HepG2 (cell line): ENCODE measurements at regions of chr17 and their contacts with region 1.

Region 1: GRCh38 chr17:64975329-64976087 is 56.2 kb upstream of the LRRC37A3 start:
- DNase-seq: peak; percentile 87
- ATAC-seq: peak; percentile 93
- H3K4me3 ChIP-seq: peak overlapping the region; percentile 58 to 86 (median 82)
- H3K27ac ChIP-seq: peak overlapping the region; percentile 71
- H3K4me1 ChIP-seq: peaks cover 29% of the 10 kb centered on the region
- H3K27me3 ChIP-seq: no peaks in the 10 kb centered on the region
- CTCF ChIP-seq: no peak; the same call in 1 of the 2 replicates
- EP300 ChIP-seq: no peak
- POLR2A ChIP-seq: peak; percentile 60 to 95
- RAD21 ChIP-seq: peak; percentile 33

Region 2: DNA sequence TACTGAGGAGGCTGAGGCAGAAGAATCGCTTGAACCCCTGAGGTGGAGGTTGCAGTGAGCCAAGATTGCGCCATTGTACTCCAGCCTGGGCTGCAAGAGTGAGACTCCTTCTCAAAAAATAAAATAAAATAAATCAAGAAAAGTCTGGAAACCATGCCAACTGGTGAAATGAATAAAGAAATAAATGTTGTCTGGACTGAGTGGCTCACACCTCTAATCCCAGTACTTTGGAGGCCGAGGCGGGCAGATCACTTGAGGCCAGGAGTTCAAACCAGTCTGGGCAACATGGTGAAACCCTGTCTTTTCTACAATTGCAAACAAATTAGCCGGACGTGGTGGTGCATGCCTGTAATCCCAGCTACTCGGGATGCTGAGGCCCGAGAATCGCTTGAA is 55.5 kb before region 1 on chr17:
- CTCF ChIA-PET with region 1: no interaction called
- POLR2A ChIA-PET with region 1: interaction called, 11 read pairs
- in situ Hi-C with region 1: no loop called
- intact Hi-C with region 1: no loop called
- DNase-seq: peak; percentile 46
- ATAC-seq: peak; percentile 34
- H3K4me3 ChIP-seq: peak overlapping the region; percentile 60 to 78 (median 64)
- H3K27ac ChIP-seq: peak overlapping the region; percentile 57
- H3K4me1 ChIP-seq: peaks cover 14% of the 10 kb centered on the region
- H3K27me3 ChIP-seq: no peaks in the 10 kb centered on the region
- CTCF ChIP-seq: no peak
- EP300 ChIP-seq: no peak
- POLR2A ChIP-seq: no peak
- RAD21 ChIP-seq: 0 out of 2 replicates have a peak, but pooled peaks have one; percentile 29

Region 3: GRCh38 chr17:64998436-64999190 is 23.1 kb after region 1 on chr17:
- CTCF ChIA-PET with region 1: no interaction called
- POLR2A ChIA-PET with region 1: no interaction called
- in situ Hi-C with region 1: no loop called
- intact Hi-C with region 1: no loop called
- DNase-seq: no peak
- ATAC-seq: no peak
- H3K4me3 ChIP-seq: no peak overlapping the region
- H3K27ac ChIP-seq: no peak overlapping the region
- H3K4me1 ChIP-seq: peaks cover 8% of the 10 kb centered on the region
- H3K27me3 ChIP-seq: no peaks in the 10 kb centered on the region
- CTCF ChIP-seq: no peak
- EP300 ChIP-seq: no peak
- POLR2A ChIP-seq: no peak
- RAD21 ChIP-seq: no peak